ENCODE measurements at regions of chr4 and their contacts with region 1.

Region 1: GRCh38 chr4:3442959-3443749 is 1.4 kb downstream of the HGFAC start:
- DNase-seq: peak in 2 of 5 donors; percentile 30 to 79
- ATAC-seq: peak; percentile 45 to 67 (median 56)
- H3K4me3 ChIP-seq: no peak overlapping the region
- H3K27ac ChIP-seq: no peak overlapping the region
- H3K4me1 ChIP-seq: peaks cover 0 to 7% (median 0%) of the 10 kb centered on the region in 12 donors
- H3K27me3 ChIP-seq: no peaks in the 10 kb centered on the region
- CTCF ChIP-seq: peak; percentile 90 to 99 (median 98)
- POLR2A ChIP-seq: no peak

Region 2: GRCh38 chr4:3106339-3107186 is 336.6 kb before region 1 on chr4:
- intact Hi-C with region 1: loop called in 2 of 10 experiments (anchors 5 to 10 kb)
- DNase-seq: peak; percentile 86 to 92 (median 86)
- ATAC-seq: peak; percentile 95 to 99 (median 98)
- H3K4me3 ChIP-seq: no peak overlapping the region
- H3K27ac ChIP-seq: peak overlapping the region in 7 of 12 donors; percentile 11 to 63 (median 39)
- H3K4me1 ChIP-seq: peaks cover 0 to 35% (median 22%) of the 10 kb centered on the region in 12 donors
- H3K27me3 ChIP-seq: no peaks in the 10 kb centered on the region
- CTCF ChIP-seq: peak; percentile 93 to 98 (median 98)
- POLR2A ChIP-seq: no peak

Region 3: DNA sequence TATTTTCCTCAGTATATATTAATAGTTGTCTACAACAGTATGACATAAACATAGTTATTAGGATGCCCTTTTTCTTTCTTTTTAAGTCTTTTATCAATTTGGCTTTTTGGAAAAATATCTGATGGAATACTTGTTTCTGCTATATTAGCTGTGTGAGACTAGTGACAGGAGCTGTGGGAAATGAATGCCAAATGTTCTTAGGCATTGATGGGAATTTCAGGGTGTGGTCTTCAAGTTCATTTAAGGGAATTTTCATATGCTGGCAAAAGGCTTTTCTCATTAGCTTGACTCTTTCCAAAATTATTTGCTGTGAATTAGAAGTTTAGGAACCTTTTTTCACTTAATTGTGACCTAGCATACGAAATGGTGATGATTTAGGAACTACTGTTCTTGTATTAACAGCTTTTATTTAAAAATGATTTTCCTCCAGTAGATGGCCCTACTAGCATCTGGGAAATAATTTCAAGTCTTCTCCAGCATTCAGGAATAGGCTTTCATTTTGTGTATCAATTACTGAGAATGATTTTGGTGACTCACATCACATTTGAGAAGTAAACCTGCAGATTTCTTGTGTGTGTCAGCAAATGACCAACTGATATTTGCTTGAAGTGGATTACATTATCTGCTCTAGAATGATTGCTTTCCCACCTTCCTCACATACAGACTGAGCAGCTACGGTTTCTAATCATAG is 297.8 kb before region 1 on chr4:
- intact Hi-C with region 1: loop called in 1 of 10 experiments (anchors 5 kb)
- DNase-seq: no peak
- ATAC-seq: no peak
- H3K4me3 ChIP-seq: no peak overlapping the region
- H3K27ac ChIP-seq: no peak overlapping the region
- H3K4me1 ChIP-seq: no peaks in the 10 kb centered on the region
- H3K27me3 ChIP-seq: no peaks in the 10 kb centered on the region
- CTCF ChIP-seq: peak in 7 of 12 donors; percentile 6 to 32 (median 25)
- POLR2A ChIP-seq: no peak

Region 4: DNA sequence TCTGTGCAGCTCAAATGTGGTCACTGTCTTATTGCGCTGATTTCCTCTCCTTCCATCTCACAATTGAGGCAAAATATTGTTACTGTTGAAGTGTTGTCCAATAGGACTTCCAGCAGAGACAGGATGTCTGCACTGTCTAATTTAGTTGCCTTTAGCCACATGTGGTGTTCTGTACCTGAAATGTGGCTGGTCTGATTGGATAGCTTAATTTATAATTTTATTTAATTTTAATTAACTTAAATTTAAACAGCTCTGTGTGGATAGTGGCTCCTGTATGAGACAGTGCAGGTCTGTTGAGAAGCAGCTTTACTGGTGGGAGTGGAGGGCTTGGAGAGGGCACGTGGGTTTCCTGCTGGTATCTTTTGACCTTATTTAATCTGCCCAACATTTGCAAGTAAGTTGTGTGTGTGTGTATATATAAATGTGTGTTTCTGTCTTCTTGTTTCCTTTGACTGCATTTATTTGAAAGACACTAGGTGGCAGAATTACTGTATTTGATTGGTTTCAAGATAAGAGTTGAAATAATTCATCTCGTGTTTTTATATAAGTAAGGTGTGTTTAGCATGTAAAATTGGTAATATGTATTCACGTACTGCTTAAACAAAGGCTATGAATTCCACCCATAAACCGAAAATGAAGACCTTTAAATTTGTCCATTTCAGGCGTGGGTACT is 249.5 kb before region 1 on chr4:
- intact Hi-C with region 1: loop called in 6 of 10 experiments (anchors 5 to 10 kb)
- DNase-seq: no peak
- ATAC-seq: no peak
- H3K4me3 ChIP-seq: no peak overlapping the region
- H3K27ac ChIP-seq: no peak overlapping the region
- H3K4me1 ChIP-seq: peaks cover 0 to 5% (median 0%) of the 10 kb centered on the region in 12 donors
- H3K27me3 ChIP-seq: no peaks in the 10 kb centered on the region
- CTCF ChIP-seq: peak in 9 of 12 donors; percentile 11 to 48 (median 25)
- POLR2A ChIP-seq: no peak

Region 5: GRCh38 chr4:3201718-3202702 is 241.1 kb before region 1 on chr4:
- intact Hi-C with region 1: loop called in 5 of 10 experiments (anchors 10 kb)
- DNase-seq: no peak
- ATAC-seq: peak in 3 of 4 donors; percentile 13 to 39 (median 15)
- H3K4me3 ChIP-seq: no peak overlapping the region
- H3K27ac ChIP-seq: peak overlapping the region in 2 of 12 donors; percentile 66 to 75
- H3K4me1 ChIP-seq: peaks cover 0 to 41% (median 0%) of the 10 kb centered on the region in 12 donors
- H3K27me3 ChIP-seq: no peaks in the 10 kb centered on the region
- CTCF ChIP-seq: no peak
- POLR2A ChIP-seq: no peak

Region 6: GRCh38 chr4:3492741-3493719 is 49.9 kb after region 1 on chr4:
- intact Hi-C with region 1: no loop called
- DNase-seq: no peak
- ATAC-seq: no peak
- H3K4me3 ChIP-seq: no peak overlapping the region
- H3K27ac ChIP-seq: no peak overlapping the region
- H3K4me1 ChIP-seq: peaks cover 0 to 34% (median 6%) of the 10 kb centered on the region in 12 donors
- H3K27me3 ChIP-seq: peaks cover 0 to 38% (median 7%) of the 10 kb centered on the region in 9 donors
- CTCF ChIP-seq: no peak
- POLR2A ChIP-seq: no peak

Measured in heart left ventricle (tissue), 16 donors.